ENCODE measurements at regions of chr11 and their contacts with region 1.

Region 1: DNA sequence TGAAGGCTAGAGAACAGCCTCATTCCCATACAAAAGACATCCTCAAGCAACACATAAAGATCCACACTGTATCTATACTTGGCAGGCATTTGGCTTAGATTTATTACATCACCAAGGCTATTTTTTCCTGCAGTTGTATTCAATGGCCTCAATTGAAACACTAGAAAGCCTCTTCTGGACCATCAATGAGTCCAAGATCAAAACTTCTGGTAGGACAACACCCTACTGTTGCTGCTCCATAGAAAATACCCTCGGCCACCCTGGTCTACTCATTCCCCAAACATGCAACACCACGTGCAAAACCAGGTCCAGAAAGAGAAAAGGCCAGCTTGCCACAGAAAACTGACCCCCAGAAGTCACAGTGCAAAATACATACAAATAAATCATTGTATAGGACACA is 56.9 kb upstream of the CADM1 start:
- DNase-seq: no peak
- H3K4me3 ChIP-seq: no peak overlapping the region
- CTCF ChIP-seq: no peak
- POLR2A ChIP-seq: no peak

Region 2: GRCh38 chr11:113634940-113635575 is 1926.1 kb before region 1 on chr11:
- intact Hi-C with region 1: loop called (anchors 5 kb)
- DNase-seq: no peak
- H3K4me3 ChIP-seq: no peak overlapping the region
- CTCF ChIP-seq: no peak
- POLR2A ChIP-seq: no peak

Region 3: DNA sequence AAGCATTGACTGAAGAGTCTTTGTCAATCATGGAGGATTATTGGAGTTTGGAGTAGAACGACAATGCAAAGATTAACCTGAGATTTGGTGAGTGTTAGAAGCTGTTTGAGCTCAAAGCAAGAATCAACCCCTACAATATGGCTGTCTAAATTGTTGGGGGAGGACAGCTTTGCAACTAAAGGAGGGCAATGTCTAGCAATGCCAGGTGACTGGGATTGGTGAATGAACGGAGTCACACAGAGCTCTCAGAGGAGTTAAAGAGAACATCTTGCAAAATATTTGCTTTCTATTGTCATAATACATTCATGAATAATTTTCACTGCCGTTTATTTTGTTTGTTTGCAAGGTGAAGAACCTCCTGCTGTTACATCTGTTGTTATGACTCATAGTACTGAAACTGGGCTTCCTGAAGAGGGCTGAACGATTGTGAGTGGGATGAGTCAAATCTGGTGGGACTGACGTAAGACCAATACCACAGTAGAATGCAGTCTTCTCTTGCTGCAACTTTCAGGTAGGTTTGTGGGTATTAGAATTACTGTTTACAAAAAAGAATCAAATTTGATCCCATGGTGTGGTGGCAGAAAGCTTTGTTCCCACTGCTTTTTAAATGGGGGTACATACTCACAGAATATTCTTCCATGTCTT is 338.8 kb before region 1 on chr11:
- intact Hi-C with region 1: no loop called
- DNase-seq: no peak
- H3K4me3 ChIP-seq: no peak overlapping the region
- CTCF ChIP-seq: no peak
- POLR2A ChIP-seq: no peak